ENCODE measurements at regions of chr9 and their contacts with region 1.

Region 1: DNA sequence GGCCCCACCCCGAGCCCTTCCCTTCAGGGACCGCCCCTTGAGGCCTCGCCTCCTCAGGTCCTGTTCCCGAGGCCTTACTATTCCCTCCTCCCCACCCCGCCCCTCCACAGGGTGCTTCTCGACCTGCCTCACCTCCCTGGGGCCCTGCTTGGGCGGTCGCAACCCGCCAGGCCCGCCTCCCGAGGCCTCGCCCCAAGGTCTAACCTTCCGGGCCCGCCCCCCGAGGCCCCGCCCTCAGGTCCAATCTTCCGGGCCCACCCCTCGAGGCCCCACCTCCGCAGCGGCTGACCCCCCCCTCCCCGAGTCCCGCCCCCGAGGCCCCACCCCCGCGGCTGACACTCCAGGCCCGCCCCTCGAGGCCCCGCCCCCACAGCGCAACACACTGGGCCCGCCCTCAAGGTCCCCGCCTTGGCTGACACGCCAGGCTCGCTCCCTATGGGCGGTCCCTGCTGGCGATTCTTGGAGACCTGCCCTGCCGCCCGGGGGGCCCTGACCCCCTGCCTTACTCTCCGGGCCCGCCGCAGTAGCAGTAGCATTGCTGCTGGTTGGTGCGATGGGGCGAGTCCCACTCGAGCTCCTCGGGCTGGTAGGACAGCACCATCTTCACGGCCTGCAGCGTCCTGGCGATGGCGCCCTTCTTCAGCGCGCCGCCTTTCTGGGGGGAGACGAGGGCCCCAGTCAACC is 8.2 kb downstream of the PHF19 start:
- DNase-seq: peak; percentile 47 to 91 (median 89)
- H3K4me3 ChIP-seq: peak overlapping the region; percentile 38 to 78 (median 59)
- H3K27ac ChIP-seq: peak overlapping the region; percentile 23 to 95 (median 86)
- H3K27me3 ChIP-seq: no peaks in the 10 kb centered on the region
- CTCF ChIP-seq: peak in 49 of 56 donors; percentile 13 to 71 (median 47)

Region 2: GRCh38 chr9:120936011-120936763 is 67.4 kb after region 1 on chr9:
- intact Hi-C with region 1: loop called in 1 of 2 experiments (anchors 2 kb)
- DNase-seq: peak; percentile 87 to 93 (median 90)
- H3K4me3 ChIP-seq: peak overlapping the region in 10 of 59 donors; percentile 0 to 25 (median 14)
- H3K27ac ChIP-seq: peak overlapping the region; percentile 57 to 95 (median 88)
- H3K27me3 ChIP-seq: no peaks in the 10 kb centered on the region
- CTCF ChIP-seq: peak; percentile 72 to 97 (median 92)

Measured in dorsolateral prefrontal cortex (tissue), 120 donors.